AG04449 (cell line): ENCODE measurements at regions of chr4 and their contacts with region 1.

Region 1: DNA sequence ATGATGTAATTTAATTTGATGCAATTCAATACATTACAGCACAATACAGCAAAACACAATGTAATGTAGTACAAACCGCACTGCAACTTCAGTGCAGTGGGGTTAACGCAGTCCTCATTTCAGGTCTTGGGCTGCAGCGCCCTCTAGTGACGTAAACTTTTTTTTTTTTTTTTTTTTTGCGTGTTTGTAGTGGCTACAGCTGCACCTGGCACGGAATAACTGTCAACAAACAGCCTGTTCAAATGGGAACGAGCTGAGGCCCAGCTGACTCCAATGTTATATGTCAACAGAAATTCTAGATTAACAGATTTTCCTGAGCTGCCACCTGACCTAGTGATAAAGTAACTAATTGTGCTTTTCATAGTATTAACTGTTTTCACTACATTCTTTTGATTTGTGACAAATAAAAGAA is 33.5 kb upstream of the RASSF6 start:
- DNase-seq: no peak
- H3K4me3 ChIP-seq: no peak overlapping the region
- CTCF ChIP-seq: peak; percentile 34

Region 2: DNA sequence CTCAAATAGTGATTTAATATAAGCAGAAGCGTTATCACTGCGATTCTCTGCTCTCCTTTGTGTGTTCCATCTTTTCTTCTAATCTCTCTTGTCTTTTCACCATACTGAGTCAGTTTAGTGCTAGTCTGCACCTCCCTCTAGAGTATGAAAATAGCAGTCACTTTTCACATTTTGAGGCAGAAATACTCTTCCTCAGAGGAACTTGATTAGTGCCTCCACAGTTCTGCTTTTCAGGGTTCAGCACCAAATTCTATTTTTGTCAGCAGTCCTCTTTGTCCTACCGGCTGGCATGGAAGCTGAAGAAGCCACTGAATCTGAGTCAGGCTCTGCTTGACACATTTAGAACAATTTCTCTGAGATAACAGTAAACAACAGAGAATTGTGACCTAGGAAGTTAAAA is 345.4 kb before region 1 on chr4:
- CTCF ChIA-PET with region 1: interaction called, 82 read pairs
- POLR2A ChIA-PET with region 1: no interaction called
- DNase-seq: no peak
- H3K4me3 ChIP-seq: no peak overlapping the region
- CTCF ChIP-seq: peak; percentile 38

Region 3: GRCh38 chr4:73341454-73341853 is 312.2 kb before region 1 on chr4:
- CTCF ChIA-PET with region 1: interaction called, 20 read pairs
- POLR2A ChIA-PET with region 1: no interaction called
- DNase-seq: no peak
- H3K4me3 ChIP-seq: no peak overlapping the region
- CTCF ChIP-seq: peak; percentile 41

Region 4: GRCh38 chr4:73573794-73574406 is 79.8 kb before region 1 on chr4:
- CTCF ChIA-PET with region 1: interaction called, 19 read pairs
- POLR2A ChIA-PET with region 1: no interaction called
- DNase-seq: peak; percentile 10
- H3K4me3 ChIP-seq: no peak overlapping the region
- CTCF ChIP-seq: peak; percentile 79

Region 5: GRCh38 chr4:73593631-73594241 is 60.0 kb before region 1 on chr4:
- CTCF ChIA-PET with region 1: interaction called, 55 read pairs
- POLR2A ChIA-PET with region 1: no interaction called
- DNase-seq: no peak
- H3K4me3 ChIP-seq: no peak overlapping the region
- CTCF ChIP-seq: peak; percentile 36

Region 6: GRCh38 chr4:73922766-73923630 is 269.3 kb after region 1 on chr4:
- CTCF ChIA-PET with region 1: interaction called, 10 read pairs
- POLR2A ChIA-PET with region 1: no interaction called
- DNase-seq: no peak
- H3K4me3 ChIP-seq: no peak overlapping the region
- CTCF ChIP-seq: peak; percentile 21